Left cardiac atrium (tissue), 4 donors: ENCODE measurements at regions of chr1 and their contacts with region 1.

Region 1: DNA sequence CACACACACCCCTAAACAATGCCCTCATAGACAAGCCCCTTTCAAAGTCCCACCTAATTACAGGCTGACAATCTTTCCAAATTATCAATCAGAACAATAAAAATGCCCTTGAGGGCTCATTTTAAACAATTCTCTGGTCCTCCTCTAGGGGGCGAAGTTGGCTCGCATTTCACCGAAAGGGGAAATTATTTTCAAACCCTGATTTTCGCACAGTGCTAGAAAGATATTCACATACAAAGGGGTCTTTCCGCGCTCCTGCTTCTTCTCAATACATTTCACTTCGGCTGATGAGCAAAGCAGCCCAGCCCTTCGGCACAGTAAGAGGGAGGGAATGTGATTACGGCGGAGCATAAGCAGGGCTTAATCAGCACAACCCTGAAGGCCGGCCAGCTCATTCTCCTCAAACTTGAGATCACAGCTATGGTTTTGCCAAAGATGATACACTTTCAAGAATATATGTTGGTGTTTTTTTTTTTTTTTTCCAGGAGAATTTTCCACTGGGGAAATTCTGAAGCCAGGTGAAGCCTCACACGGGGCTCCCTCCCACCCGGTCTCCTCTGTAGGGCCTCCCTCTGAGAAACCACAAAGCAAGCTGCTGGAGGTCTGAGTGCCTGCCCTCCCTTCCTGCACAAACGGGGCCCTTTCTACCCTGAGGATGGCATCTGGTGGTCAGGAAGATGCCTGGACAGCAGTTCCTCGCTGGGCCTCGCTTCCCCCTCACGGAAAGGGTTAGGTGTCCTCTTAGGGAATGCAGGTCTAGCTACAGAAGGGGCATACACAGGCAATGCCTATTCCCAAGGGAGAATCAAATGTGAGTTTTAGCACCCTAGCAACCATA is 66.9 kb downstream of the GNG12 start:
- DNase-seq: peak; percentile 46
- ATAC-seq: peak; percentile 72 to 92

Region 2: GRCh38 chr1:67664048-67664447 is 102.3 kb before region 1 on chr1:
- intact Hi-C with region 1: no loop called
- DNase-seq: no peak
- ATAC-seq: no peak

Region 3: DNA sequence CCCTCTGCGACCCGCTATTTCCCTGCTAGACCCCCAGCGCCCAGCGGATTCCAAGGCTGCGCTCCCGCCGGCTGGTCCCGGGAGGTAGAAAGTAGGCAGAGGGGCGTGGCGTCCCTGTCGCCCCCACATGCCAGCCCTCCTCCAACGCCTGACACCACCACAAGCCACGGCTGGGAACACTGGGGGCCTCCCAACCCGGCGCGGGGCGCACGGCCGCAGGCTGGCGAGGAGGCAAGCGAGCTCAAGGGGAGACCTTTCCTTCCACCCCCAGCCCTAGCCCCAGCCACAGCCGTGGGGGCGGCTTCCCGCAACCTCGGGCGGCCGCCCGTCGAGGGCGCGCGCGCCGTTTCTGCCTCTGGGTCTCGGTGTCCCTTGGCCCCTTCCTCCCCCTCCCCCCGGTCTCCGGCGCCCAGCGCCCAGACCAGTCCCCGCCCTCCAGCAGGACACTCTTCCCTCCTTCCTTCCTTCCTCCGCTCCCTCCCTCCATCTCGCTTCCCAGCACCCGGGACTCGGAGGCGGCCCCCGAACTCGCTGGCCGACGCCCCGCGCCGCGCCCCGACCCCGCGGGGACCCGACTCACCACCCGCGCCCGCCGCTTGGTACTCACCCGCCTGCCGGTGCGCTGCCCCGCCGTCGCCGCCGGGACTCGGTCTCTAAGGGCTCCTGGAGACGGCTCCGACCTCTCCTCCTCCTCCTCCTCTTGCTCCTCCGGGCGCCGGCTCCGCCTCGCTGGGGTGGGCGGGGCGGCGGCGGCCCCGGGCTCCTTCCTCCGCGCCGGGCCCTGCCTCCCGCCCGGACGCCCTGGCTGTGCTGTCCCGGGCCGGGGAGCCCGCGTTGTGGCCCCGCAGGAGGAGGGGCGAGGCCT is 66.6 kb after region 1 on chr1 and contains the start of gene GNG12:
- intact Hi-C with region 1: loop called (anchors 5 to 10 kb)
- DNase-seq: peak; percentile 79
- ATAC-seq: peak; percentile 92 to 95
- total RNA-seq, gene GNG12: 34.1 to 49.6 TPM

Region 4: GRCh38 chr1:68051475-68051874 is 285.1 kb after region 1 on chr1:
- intact Hi-C with region 1: no loop called
- DNase-seq: peak; percentile 58
- ATAC-seq: peak; percentile 76 to 85

Region 5: GRCh38 chr1:68111519-68112436 is 345.4 kb after region 1 on chr1:
- intact Hi-C with region 1: loop called in 1 of 2 experiments (anchors 5 kb)
- DNase-seq: peak; percentile 52
- ATAC-seq: peak; percentile 84 to 94